ENCODE measurements at regions of chr11 and their contacts with region 1.

Region 1: GRCh38 chr11:97389270-97389669 is 999.5 kb downstream of the JRKL start:
- DNase-seq: no peak
- ATAC-seq: no peak

Region 2: GRCh38 chr11:97414801-97415200 is 25.5 kb after region 1 on chr11:
- intact Hi-C with region 1: no loop called
- DNase-seq: no peak
- ATAC-seq: no peak

Region 3: GRCh38 chr11:98979210-98979609 is 1589.9 kb after region 1 on chr11:
- intact Hi-C with region 1: loop called (anchors 5 kb)
- DNase-seq: no peak
- ATAC-seq: no peak

Measured in sciatic nerve (tissue), 2 donors.